ENCODE measurements at regions of chr5 and their contacts with region 1.

Region 1: DNA sequence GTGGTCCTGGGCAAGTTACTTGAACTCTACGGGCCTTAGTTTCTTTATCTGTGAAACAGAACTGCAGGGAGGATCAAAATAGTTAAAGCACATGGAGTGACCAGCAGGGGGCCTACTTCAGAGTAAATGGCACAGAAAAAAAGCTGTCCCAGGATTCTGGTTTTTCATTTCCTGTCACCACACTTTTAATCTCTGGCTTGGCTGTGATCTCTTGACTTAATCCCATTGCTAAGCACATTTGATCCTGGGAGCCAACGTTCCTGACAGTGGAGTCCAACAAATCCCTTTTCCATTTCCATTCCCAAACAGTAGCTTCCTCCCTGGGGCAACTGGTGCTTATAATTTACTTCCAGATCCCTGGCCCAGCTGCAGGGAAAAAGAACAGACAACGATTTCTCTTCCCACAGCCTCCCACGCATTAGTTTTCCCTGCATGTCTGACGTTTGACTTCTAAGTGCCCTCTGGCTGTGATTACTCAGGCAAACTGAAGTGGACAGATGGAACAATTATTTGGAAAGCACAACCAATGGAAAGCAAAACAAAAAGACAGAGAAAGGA is 136.5 kb upstream of the STK32A start:
- DNase-seq: no peak
- ATAC-seq: peak; percentile 67; the same call in 2 of the 3 replicates
- H3K4me3 ChIP-seq: no peak overlapping the region
- H3K27ac ChIP-seq: no peak overlapping the region
- H3K4me1 ChIP-seq: no peaks in the 10 kb centered on the region
- H3K27me3 ChIP-seq: no peaks in the 10 kb centered on the region
- CTCF ChIP-seq: peak; percentile 42 to 54 (median 50)
- EP300 ChIP-seq: no peak
- POLR2A ChIP-seq: no peak
- RAD21 ChIP-seq: 0 out of 2 replicates have a peak, but pooled peaks have one; percentile 26

Region 2: DNA sequence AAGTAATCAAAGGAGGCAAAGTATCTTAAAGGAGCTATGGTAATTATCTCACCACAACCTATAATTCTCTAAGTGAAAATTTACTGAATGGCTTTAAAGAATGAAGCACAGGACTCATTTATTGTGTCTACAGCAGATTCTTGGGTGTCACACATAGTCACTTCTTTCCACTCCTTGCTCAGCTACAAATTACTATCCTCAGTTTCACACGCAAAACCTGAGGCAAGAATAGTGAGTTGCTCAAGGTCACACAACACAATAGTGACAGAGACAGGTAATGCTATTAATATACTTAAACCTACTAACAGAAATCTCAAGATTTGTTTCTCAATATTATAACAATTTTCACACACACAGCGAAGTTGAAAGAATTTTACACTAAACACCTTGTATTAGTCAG is 15.7 kb after region 1 on chr5:
- CTCF ChIA-PET with region 1: interaction called, 15 read pairs
- POLR2A ChIA-PET with region 1: no interaction called
- RAD21 ChIA-PET with region 1: no interaction called
- SMC1A ChIA-PET with region 1: interaction called, 3 read pairs
- in situ Hi-C with region 1: no loop called
- intact Hi-C with region 1: no loop called
- DNase-seq: no peak
- ATAC-seq: no peak
- H3K4me3 ChIP-seq: no peak overlapping the region
- H3K27ac ChIP-seq: no peak overlapping the region
- H3K4me1 ChIP-seq: no peaks in the 10 kb centered on the region
- H3K27me3 ChIP-seq: no peaks in the 10 kb centered on the region
- CTCF ChIP-seq: no peak
- EP300 ChIP-seq: no peak
- POLR2A ChIP-seq: no peak
- RAD21 ChIP-seq: no peak

Measured in GM12878 (cell line).